Right ventricle myocardium inferior (tissue), 1 donor: ENCODE measurements at regions of chr6 and their contacts with region 1.

Region 1: DNA sequence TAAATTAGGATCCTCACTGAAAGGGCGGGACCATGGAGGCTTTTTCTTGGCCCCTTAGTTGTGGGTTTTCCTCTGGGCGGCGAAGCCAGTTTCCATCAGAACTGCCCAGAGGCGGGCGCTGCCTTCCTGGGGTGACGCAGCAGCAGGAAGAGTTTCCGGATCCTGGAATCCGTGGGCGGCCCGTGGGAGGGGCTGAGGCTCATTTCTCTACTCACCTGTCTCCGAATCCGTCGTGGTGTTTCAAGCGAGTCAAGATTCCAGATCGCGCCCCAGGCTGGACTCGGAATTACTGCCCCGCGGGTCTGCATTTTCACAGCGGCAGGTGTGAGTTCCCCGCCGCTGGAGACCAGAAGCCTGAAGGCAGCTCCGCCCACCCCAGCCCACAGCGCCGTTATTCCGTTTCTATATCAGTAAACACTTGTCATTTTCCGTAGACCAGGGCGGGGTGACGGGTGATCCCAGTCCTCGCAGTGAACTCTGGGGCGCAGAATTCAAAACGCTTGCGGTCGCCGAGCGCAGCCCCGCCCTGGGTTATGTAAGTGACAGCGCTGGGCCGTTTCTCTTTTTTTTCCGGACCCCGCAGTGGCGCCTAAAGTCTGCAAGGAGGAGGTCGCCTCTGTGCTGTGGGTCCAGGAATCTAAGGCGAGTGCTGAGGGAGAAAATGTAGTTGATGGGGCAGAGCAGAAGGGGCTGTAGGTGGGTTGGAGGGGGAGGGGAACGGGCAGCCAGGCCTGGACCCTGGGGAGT is 27.2 kb upstream of the POU5F1 start:
- DNase-seq: peak; percentile 96
- ATAC-seq: peak; percentile 91

Region 2: DNA sequence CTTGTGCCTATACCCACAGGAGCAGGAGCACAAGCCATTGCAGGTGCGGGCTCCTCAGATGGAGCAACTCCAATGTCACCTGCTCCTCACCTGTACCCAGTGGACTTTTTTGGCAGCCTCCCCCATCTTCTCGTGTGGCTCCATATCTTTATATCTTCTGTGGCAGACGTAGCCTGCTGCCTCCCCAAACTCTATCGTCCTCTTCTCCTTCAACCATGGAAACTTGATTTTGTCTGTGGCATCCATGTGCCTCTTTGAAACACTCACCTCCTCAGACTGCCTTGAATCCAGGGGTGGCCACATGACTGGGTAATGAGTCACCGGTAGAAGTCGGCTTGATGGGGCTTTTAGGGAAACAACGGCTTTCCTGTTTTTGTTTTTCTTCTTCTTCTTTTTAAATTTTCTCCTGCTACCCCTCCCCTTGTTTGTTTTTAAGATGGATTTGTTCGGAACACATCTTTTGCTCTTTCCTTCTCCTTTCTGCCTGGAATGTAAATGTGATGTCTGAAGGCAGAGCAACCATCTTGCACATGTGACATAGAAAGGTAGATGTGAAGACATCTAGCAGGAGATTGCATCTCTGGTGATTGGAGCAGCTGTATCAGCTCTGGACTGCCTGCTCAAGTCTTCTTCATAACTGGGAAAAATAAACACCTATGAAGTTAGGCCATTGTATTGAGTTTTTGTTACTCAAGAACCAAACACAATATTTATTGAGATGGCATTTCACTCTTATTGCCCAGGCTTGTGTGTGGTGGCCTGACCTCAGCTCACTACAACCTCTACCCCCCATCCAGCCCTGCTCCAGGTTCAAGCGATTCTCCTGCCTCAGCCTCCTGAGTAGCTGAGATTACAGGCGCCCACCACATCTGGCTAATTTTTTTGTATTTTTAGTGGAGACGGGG is 383.3 kb before region 1 on chr6:
- intact Hi-C with region 1: no loop called
- DNase-seq: no peak
- ATAC-seq: no peak

Region 3: GRCh38 chr6:31139599-31139998 is 58.1 kb before region 1 on chr6:
- intact Hi-C with region 1: loop called (anchors 1 kb)
- DNase-seq: no peak
- ATAC-seq: no peak

Region 4: DNA sequence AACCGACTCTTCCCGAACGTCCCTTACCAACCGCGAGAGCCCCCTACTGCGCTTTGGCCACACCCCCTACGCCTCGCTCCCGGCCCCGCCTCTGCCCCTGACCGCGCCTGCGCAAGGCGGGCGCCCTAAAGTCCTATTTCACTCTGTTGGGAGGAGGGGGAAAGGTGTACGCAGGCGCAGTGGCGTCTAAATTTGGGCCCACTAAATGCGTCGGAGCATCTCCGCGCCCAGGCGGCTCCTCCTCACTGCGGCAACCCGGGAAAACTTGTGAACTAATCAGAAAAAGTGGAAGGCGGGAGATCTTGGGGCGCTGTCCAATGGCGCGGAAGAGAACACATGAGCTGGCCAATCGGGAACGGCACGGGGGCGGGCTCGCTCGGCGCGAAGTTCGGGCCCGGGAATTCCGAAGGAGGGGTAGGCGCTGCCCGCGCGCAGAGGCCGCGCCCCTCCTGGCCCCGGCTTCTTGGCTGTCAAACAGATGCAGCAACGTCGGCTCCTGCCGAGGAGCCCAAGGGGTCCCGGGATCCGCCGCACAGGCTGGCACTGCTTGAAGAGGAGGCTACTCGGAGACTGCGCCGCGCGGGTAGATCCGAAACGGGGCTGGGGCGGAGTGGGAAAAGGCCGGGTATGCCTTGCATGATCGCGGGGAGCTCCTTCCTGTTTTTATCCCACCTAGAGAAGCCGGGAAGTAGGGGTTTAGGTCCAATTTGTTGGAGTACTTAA is 39.4 kb before region 1 on chr6 and contains the start of gene TCF19:
- intact Hi-C with region 1: loop called (anchors 5 kb)
- DNase-seq: peak; percentile 100
- ATAC-seq: peak; percentile 99
- total RNA-seq, gene TCF19: 5.2 TPM

Region 5: DNA sequence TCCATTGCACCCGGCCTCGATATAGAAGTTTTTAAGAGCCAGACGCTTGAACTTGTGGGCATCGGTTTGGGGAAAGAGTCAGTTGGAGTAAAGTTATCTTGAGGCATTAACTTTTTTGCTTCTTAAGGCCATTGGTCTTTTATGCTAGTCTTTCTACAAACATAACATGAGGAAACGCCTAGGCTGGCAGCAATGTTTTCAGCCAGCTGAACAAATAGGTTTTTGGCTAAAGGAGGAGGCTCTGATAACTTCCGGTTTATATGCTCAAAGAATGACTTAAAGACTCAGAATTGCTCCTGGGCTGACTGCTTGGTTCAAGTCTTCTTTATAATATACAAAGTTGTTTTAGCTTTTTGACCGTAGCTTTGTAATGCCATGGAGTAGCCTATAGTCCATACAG is 28.0 kb after region 1 on chr6:
- intact Hi-C with region 1: no loop called
- DNase-seq: no peak
- ATAC-seq: no peak

Region 6: DNA sequence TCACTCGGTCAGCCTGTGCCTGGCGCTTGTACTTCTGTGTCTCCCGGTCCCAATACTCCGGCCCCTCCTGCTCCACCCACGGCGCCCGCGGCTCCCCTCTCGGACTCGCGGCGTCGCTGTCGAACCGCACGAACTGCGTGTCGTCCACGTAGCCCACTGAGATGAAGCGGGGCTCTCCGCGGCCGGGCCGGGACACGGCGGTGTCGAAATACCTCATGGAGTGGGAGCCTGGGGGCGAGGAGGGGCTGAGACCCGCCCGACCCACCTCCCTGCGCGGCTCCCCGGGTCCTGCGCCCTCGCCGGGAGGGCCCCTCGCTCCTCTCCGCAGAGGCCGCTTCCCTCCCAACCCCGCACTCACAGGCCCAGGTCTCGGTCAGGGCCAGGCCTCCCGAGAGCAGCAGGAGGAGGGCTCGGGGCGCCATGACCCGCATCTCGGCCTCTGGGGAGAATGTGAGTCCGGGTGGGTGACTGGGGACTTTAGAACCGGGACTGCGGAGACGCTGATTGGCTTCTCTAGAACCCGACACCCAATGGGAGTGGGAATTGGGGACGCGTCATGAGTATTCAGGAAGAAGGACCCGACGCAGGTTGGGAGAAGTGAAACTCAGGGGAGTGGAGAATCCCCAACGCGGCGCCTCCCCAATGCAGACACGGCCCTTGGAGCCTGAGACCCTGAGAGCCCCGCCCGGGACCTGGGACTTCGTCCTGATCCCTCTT is 74.1 kb after region 1 on chr6 and contains the start of gene HLA-C:
- intact Hi-C with region 1: loop called (anchors 2 kb)
- DNase-seq: peak; percentile 89
- ATAC-seq: peak; percentile 99
- total RNA-seq, gene HLA-C: 185 TPM

Region 7: DNA sequence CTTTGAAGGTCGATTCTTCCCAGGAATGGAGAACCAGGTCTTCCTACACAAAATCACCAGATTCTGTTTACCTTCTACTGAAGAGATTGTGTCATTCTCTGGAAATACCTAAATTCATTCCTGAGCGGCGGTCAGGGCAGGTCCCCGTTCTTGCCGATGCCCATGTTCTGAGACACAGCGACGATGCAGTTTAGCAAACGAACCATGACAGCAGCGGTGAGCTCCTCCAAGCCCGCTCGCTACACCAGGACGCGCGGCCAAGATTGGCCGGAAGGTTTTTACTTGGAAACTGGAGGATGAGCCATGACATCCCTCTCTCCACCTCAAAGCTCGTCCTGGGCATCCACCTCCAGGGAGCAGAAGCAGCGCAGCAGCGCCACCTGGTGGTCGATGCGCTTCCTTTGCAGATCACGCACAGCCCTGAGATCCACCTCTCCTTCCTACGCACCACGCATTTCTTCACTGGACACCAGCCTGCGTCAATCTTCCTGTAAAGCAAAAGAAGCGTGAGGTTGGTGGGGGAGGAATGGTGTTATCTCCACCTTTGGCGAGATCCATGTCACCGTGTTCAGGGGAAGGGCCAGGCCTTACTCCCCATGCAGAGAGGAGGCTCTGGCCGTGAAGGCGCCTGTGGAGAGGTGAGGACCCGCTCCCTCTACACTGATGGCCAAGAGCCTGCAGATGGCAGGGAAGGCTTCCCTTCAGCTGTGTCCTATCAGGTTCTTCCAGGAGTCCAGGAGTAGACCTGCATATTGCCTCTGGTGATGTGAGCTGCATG is 169.2 kb after region 1 on chr6:
- intact Hi-C with region 1: loop called (anchors 1 kb)
- DNase-seq: peak; percentile 93
- ATAC-seq: peak; percentile 99